ENCODE measurements at regions of chr12 and their contacts with region 1.

Region 1: DNA sequence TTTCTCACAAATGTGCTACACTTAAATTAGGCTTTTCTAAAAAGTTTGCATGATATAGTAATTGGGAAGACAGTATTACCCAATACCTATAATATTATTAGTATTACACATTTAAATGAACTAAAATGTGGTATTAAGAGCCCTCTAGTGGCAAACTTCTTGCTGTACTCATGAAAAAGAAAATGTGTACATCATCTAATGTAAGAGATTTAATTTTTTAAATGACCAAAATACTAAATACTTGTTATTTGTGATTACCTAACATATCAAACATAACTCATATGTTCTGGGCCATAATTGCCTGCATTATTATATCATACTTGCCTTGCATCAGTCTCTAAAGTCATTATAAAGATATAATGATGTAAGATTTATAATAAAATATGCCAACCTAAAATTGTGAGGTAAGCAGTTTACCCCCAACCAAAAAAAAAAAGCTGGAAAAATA is 64.2 kb downstream of the DNAI7 start:
- DNase-seq: no peak
- ATAC-seq: no peak
- H3K4me3 ChIP-seq: no peak overlapping the region
- H3K27ac ChIP-seq: no peak overlapping the region
- H3K4me1 ChIP-seq: no peaks in the 10 kb centered on the region
- H3K27me3 ChIP-seq: no peaks in the 10 kb centered on the region

Region 2: DNA sequence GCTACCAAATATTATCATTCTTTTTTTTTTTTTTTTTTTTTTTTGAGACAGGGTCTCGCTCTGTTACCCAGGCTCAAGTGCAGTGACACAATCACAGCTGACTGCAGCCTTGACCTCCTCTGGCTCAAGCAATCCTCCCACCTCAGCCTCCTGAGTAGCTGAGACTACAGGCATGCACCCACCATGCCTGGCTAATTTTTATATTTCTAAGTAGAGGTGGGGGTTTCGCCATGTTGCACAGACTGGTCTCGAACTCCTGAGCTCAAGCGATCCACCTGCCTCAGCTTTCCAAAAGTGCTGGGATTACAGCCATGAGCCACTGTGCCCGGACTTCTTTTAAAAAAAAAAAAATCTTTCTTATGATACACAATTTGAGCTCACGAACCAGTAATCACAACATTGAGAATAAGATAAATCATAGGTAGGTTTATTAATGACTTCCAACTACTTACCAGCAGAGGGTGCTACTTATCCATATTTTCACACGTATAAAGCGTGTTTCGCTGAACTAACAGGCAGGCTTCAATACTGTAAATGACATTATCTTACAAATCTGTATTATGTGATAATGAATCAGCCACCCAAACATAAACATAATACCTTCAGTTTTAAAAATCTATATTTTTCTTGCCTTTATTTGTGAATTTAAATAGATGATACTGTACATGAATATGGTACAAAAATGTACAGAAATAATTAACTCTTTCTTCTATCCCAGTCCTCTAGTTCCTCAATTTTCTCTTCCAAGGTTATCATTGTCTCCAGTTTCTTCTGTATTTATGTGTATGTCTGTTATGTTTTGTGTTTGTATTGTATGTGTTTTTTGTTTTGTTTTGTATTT is 139.3 kb before region 1 on chr12:
- intact Hi-C with region 1: loop called (anchors 2 kb)
- DNase-seq: no peak
- ATAC-seq: peak; percentile 87
- H3K4me3 ChIP-seq: no peak overlapping the region
- H3K27ac ChIP-seq: no peak overlapping the region
- H3K4me1 ChIP-seq: no peaks in the 10 kb centered on the region
- H3K27me3 ChIP-seq: no peaks in the 10 kb centered on the region

Region 3: GRCh38 chr12:25469861-25470260 is 339.1 kb after region 1 on chr12:
- intact Hi-C with region 1: no loop called
- DNase-seq: no peak
- ATAC-seq: no peak
- H3K4me3 ChIP-seq: no peak overlapping the region
- H3K27ac ChIP-seq: no peak overlapping the region
- H3K4me1 ChIP-seq: no peaks in the 10 kb centered on the region
- H3K27me3 ChIP-seq: no peaks in the 10 kb centered on the region

Measured in aorta (tissue), 5 donors.